RWPE1 (cell line): ENCODE measurements at regions of chr1 and their contacts with region 1.

Region 1: DNA sequence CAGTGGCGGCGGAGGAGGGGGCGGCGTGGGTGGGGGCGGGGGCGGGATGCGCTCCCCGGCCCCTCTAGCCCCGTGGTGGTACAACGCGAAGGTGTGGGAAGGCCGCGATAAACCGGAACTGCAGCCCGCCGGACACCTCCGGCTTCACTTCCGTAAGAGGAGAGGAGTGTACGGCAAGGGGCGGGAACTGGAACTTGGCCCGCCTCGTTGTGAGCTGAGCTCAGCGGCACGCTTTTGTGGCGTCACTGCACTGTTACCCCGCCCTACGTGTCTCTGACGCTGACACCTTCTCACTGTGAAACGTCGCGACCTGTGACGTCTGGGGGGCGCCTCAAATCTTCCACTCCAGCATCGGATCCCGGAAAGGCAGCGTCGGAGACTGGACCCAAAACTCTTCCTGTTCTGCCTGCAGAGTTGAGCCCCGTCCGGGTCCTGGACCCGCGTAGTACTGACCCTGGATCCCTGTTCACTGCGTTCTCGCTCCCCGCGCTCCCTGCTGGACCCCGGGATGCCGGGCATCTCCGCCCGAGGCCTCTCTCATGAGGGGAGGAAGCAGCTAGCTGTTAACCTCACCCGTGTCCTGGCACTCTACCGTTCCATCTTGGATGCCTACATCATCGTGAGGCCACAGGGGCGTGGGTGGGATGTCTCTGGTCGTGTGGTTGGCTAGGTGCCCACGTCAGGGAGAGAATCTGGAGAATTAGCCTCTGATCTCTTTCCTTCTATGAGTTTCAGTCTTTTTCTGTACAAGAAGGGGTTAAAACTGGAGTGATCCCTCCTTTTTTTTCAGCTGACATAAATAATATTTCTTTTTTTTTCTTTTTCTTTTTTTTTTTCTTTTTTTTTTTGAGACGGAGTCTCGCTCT is at the start of gene ISG20L2:
- DNase-seq: peak; percentile 95
- H3K27ac ChIP-seq: peak within 1 kb of the TSS; percentile 92
- CTCF ChIP-seq: no peak

Region 2: DNA sequence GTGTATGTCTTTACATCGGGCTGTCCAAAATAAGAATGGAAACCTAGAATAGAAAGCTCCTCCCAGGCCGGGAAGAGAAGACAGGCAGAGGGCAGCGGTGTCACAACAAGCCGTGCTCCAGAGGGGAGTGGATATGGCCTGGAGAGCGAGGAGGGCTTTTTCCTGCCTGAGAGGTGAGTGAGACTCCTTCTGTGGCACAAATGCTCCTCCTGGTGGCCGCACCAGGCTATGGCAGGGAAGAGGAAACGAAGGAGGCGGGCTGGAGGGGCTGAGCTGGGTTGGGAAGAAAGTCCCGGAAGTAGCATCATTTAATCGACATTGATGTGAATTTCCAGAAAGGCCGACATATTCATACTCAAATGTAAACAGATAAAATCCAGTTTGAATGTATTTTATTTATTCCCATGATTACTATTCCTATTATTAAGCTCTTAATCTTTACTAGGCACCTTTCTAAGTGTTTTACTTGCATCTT is 283.0 kb before region 1 on chr1:
- CTCF ChIA-PET with region 1: no interaction called
- POLR2A ChIA-PET with region 1: no interaction called
- DNase-seq: peak; percentile 82
- H3K27ac ChIP-seq: no peak overlapping the region
- CTCF ChIP-seq: peak; percentile 93

Region 3: DNA sequence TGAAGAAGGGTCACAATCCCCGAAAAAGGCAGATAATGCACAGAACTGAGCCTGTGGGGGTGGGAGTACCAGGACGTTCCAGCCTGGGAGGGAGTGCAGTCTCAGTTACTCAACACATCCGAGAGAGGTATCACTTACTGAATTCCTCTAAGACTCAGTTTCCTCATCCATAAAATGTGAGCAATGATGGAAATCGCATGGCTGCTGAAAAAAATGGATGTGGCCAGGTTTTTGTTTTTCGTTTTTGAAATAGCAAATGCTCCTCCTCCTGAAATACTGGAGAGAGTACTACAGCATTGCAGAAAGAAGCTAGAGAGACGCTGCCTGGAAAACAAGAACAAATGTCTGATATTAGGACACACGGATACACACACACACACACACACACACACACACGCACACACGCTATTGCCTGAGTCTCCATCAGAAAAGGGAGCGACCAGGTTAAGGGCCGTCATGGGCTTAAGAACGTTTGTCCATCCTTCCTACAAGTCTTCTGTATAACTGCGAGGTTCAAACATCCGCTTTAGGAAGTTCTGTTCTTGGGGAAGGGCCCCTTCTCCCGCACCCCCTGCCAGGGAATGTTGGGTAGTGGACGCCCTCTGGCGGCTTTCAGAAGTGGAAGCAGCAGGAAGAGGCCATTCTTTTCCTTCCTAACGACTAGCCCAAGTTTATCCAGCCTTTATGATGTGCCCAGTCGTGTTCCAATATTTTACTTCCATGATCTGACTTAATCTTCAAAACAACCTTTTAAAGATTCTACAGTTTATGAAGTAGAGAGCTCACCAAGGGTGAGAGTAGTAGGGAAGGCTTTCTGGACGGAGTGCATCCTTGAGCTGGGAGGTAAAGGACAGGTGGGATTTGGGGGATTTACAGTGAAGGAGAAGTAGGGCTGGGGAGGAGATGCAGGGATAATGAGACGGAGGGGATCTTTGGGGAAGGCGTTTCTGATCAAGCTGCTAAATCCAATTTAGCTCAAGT is 50.9 kb before region 1 on chr1:
- CTCF ChIA-PET with region 1: interaction called, 19 read pairs
- POLR2A ChIA-PET with region 1: no interaction called
- DNase-seq: peak; percentile 69
- H3K27ac ChIP-seq: no peak overlapping the region
- CTCF ChIP-seq: peak; percentile 88

Region 4: GRCh38 chr1:156700736-156701531 is 27.9 kb before region 1 on chr1:
- CTCF ChIA-PET with region 1: interaction called, 29 read pairs
- POLR2A ChIA-PET with region 1: no interaction called
- DNase-seq: no peak
- H3K27ac ChIP-seq: peak overlapping the region; percentile 47
- CTCF ChIP-seq: no peak

Region 5: DNA sequence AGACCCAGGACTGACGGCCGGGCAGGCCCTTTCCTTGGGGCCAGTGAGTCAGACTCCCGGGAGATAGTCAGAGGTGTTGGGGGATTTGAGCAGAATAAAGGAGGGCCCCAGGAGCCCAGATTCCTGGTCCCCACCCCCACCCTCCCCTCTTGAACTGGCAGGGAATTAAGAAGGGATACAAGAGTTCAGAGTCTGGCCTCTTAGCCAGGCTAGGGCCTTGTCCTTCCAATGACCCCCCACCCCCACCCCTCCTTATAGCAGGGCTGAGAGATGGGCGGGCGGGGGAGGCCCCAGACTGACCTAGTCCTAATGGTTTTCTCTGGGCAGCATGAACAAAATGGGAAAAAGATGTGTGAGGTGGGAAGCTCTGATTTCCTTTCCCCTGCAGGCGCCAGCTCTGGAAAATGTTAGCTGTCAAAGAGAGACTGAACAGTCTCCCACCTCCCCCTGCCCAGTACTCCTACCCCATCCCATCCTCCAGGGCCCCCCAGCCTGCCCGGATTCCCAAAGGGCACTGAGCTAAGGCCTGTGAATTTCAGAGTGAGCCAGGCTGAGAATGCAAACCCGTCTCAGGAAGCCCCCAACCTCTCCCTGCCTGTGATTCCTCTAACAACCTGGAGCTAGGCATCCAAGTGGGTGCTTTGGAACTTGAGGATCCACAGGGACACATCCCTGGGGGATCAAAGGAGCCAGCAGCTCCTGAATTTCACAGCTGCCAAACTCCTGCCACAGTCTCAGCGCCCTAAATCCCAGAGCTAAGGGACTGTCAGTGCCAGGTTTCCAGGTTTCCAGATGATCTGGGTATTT is 17.6 kb before region 1 on chr1:
- CTCF ChIA-PET with region 1: interaction called, 29 read pairs
- POLR2A ChIA-PET with region 1: no interaction called
- DNase-seq: no peak
- H3K27ac ChIP-seq: peak overlapping the region; percentile 95
- CTCF ChIP-seq: no peak

Region 6: GRCh38 chr1:156892190-156893047 is 163.6 kb after region 1 on chr1:
- CTCF ChIA-PET with region 1: interaction called, 10 read pairs
- POLR2A ChIA-PET with region 1: no interaction called
- DNase-seq: peak; percentile 83
- H3K27ac ChIP-seq: peak overlapping the region; percentile 99
- CTCF ChIP-seq: peak; percentile 92